Activated CD8-positive, alpha-beta memory T cell treated with anti-CD3 and anti-CD28 coated beads, Interleukin-2, amount 10 ng/mL, durations not matched to agents 7 days and 5 days (primary cell): ENCODE measurements at regions of chr4 and their contacts with region 1.

Region 1: DNA sequence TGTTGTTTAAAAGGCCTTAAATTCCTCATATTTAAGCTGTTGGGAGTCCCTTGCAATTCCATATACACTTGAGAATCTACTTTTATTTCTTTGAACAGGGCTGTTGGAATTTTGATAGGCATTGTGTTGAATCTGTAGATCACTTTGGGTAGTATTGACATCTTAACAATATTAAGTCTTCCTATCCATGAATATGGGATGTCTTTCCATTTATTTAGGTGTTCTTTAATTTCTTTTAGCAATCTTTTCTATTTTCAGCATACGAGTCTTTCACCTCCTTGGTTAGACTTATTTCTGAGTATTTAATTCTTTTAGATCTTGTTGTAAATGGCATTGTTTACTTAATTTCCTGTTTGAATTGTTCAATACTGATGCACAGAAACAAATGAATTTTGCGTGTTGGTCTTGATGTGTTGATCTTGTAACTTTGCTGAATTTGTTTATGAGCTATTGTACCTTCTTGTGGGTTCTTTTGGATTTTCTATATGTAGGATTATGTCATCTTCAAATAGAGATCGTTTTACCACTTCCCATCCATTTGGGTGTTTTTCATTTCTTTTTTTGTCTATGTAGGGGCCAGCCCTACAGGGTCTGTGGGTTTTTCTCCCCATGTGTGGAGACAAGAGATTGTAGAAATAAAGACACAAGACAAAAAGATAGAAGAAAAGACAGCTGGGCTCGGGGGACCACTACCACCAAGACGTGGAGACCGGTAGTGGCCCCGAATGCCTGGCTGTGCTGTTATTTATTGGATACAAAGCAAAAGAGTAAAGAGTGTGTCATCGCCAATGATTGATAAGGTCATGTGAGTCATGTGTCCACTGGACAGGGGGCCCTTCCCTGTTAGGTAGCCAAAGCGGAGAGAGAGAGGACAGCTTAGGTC is 18.2 kb upstream of the CTBP1 start:
- DNase-seq: no peak
- ATAC-seq: peak; percentile 86
- H3K4me3 Mint-ChIP-seq: peak overlapping the region; percentile 74
- H3K27ac Mint-ChIP-seq: peak overlapping the region; percentile 97
- H3K4me1 Mint-ChIP-seq: peaks cover 21% of the 10 kb centered on the region
- H3K27me3 Mint-ChIP-seq: no peaks in the 10 kb centered on the region

Region 2: DNA sequence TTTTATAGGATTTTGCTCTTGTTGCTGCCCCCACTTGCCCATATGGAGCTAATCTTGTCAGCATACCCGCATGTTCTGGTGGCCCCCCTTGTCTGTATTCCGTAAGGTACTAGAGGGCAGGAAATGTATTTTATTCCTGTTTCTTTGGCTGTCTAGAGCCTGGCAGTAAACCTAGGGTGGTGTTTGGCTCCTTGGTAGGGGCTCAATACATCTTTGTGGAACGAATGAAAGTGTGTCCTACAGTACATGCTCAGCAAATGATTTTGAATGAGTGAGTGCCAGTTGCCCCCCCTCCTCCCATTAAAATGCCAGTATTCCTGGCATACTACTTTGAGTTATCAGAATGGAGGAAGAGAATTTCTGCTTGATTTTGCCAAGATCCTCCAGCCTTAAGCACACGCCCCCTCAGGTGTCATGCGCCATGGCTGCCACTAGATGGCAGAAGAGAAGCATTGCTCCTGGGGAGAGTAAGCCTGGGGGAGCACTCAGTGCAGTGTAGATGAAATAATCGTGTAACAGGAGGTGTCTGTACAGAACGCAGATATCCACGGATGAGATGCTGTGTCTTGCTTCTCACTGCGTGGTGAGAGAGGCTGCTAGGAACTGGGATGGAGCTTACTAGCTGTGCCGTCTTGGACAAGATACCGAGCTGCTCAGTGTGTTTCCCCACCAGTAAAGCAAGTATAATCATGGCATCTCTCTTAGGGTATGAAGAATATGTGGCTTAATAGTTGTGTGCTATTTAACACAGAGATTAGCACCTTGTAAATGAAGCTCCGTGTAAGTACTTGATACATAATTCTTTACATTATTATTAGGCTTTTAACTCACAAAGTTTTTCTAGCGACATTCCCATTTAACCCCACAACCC is 136.6 kb before region 1 on chr4:
- CTCF ChIA-PET with region 1: interaction called, 54 read pairs
- DNase-seq: peak; percentile 84
- ATAC-seq: peak; percentile 98
- H3K4me3 Mint-ChIP-seq: no peak overlapping the region
- H3K27ac Mint-ChIP-seq: no peak overlapping the region
- H3K4me1 Mint-ChIP-seq: peaks cover 4% of the 10 kb centered on the region
- H3K27me3 Mint-ChIP-seq: peaks cover 15% of the 10 kb centered on the region

Region 3: GRCh38 chr4:1137063-1137776 is 129.9 kb before region 1 on chr4:
- CTCF ChIA-PET with region 1: interaction called, 54 read pairs
- DNase-seq: no peak
- ATAC-seq: peak; percentile 36
- H3K4me3 Mint-ChIP-seq: peak overlapping the region; percentile 70
- H3K27ac Mint-ChIP-seq: peak overlapping the region; percentile 72
- H3K4me1 Mint-ChIP-seq: peaks cover 16% of the 10 kb centered on the region
- H3K27me3 Mint-ChIP-seq: peaks cover 24% of the 10 kb centered on the region

Region 4: DNA sequence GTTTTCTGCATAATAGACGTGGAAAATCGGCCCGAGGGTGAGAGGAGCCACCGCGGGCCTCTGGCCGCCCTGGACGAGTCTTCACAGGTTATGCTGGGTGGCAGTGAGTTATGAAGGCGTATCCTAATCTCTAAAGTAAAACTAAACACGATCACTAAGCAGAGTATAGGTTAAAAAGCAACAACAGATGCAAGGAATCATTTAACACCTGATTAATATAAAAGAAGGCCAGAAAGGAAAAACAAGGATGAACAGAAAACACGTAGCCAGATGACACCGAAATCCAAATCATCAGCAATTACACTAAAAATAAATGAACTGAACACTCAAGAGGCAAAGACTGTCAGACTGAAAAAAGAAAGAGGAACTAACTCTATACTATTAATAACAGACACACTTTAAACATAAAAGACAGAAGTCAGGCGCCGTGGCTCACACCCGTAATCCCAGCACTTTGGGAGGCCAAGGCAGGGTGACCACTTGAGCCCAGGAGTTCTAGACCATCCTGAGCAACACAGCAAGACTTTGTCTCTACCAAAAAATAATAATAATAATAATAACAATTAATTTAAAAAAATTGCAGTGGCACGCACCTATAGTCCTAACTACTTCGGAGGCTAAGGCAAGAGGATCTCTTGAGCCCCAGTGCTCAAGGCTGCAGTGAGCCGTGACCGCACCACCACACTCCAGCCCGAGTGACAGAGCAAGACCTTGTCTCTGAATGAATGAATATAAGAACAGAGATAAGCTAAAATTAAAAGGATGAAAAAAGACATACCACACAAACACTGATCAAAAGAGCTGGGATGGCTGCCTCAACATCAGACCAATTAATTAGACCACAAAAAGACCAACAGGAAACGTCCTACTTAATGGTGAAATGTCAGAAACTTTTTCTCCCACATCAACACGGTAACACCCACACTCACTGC is 48.2 kb before region 1 on chr4:
- CTCF ChIA-PET with region 1: interaction called, 16 read pairs
- DNase-seq: no peak
- ATAC-seq: no peak
- H3K4me3 Mint-ChIP-seq: no peak overlapping the region
- H3K27ac Mint-ChIP-seq: peak overlapping the region; percentile 67
- H3K4me1 Mint-ChIP-seq: peaks cover 43% of the 10 kb centered on the region
- H3K27me3 Mint-ChIP-seq: no peaks in the 10 kb centered on the region

Region 5: DNA sequence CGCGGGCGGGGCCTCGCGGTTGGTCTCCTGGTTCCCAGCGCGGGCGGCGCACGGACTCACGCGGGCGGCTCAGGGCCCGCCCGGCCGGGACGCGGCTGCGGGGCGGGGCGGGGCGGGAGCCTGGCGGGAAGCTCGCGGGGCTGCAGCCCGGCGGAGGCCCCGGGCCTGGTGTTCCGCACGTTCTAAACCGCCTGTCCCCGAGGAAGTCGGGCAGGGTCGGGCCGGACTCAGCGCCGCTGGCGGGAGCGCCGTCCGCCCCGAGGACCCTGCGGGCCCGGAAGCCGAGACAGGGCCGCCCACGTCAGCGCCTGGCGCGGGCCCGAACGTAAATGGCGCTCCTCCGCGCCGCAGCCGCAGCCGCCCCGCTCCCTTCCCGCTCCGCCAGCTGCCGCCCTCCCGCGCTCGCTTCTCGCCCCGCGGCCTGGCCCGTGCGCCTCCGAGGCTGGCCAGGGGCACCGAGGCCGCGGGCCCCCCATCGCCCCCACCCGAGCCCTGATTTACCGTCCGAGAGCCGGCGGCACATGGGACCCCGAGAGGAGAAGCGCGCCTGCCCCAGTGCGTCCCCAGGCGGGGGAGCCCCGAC is 17.9 kb before region 1 on chr4:
- CTCF ChIA-PET with region 1: interaction called, 58 read pairs
- DNase-seq: peak; percentile 83
- ATAC-seq: peak; percentile 66
- H3K4me3 Mint-ChIP-seq: peak overlapping the region; percentile 78
- H3K27ac Mint-ChIP-seq: peak overlapping the region; percentile 95
- H3K4me1 Mint-ChIP-seq: peaks cover 68% of the 10 kb centered on the region
- H3K27me3 Mint-ChIP-seq: no peaks in the 10 kb centered on the region

Region 6: DNA sequence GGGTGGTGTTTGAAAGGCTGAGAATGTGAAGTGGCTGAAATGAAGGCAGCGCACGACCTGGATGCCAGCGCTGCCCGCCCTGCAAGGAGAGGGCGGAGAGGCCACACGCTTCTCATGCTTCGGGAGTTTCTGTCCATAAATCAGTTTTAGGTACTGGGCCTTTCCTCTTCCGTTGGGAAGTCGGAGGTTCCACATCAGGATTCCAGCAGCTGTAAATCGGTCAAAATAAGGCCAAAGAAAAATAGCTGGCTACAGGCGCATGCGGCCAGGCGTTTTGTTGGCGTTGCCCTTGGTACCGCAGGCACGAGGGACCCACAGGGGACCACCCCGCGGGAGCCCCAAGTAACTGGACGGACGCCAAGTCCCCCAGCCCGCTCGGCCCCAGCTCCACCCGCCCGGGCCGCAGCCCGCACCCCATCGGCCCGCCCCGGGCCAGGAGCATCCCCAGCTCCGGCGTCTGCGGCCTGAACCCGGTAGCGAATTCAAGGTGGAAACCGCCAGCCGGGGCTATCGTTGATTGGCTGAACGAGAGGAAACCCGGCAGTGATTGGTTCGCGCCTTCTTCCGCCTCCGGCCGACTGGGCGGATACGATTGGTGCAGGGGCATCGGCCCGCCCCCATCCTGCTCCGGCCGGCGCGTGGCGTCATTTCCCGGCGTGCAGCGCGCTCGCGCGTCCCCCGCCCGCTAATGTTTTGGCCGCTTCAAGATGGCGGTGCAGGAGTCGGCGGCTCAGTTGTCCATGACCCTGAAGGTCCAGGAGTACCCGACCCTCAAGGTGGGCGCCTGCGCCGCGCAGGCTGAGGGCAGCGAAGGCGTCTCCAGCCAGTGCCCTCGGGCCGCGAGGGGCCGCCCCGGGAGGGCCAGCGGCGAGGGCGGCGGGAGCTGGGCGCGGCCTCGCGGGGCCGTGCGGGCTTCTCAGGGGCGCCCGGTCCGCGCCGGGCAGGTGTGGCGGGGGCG is 22.4 kb after region 1 on chr4 and contains the start of gene MAEA:
- CTCF ChIA-PET with region 1: interaction called, 17 read pairs
- DNase-seq: peak; percentile 98
- ATAC-seq: peak; percentile 96
- H3K4me3 Mint-ChIP-seq: peak within 1 kb of the TSS; percentile 88
- H3K27ac Mint-ChIP-seq: peak within 1 kb of the TSS; percentile 91
- H3K4me1 Mint-ChIP-seq: peaks cover 33% of the 10 kb centered on the region
- H3K27me3 Mint-ChIP-seq: no peaks in the 10 kb centered on the region
- total RNA-seq, gene MAEA: 63.9 to 70.0 TPM

Region 7: GRCh38 chr4:1346781-1347409 is 79.8 kb after region 1 on chr4 and contains the start of gene UVSSA:
- CTCF ChIA-PET with region 1: interaction called, 18 read pairs
- DNase-seq: peak; percentile 100
- ATAC-seq: peak; percentile 93
- H3K4me3 Mint-ChIP-seq: peak within 1 kb of the TSS; percentile 85
- H3K27ac Mint-ChIP-seq: peak within 1 kb of the TSS; percentile 96
- H3K4me1 Mint-ChIP-seq: peaks cover 36% of the 10 kb centered on the region
- H3K27me3 Mint-ChIP-seq: no peaks in the 10 kb centered on the region
- total RNA-seq, gene UVSSA: 18.2 to 25.2 TPM